Dendritic cell treated with granulocyte-macrophage colony-stimulating factor and Interleukin-4, amounts not matched to agents 40 ng/mL and 50 ng/mL, for 4 days (primary cell): ENCODE measurements at regions of chr12 and their contacts with region 1.

Region 1: DNA sequence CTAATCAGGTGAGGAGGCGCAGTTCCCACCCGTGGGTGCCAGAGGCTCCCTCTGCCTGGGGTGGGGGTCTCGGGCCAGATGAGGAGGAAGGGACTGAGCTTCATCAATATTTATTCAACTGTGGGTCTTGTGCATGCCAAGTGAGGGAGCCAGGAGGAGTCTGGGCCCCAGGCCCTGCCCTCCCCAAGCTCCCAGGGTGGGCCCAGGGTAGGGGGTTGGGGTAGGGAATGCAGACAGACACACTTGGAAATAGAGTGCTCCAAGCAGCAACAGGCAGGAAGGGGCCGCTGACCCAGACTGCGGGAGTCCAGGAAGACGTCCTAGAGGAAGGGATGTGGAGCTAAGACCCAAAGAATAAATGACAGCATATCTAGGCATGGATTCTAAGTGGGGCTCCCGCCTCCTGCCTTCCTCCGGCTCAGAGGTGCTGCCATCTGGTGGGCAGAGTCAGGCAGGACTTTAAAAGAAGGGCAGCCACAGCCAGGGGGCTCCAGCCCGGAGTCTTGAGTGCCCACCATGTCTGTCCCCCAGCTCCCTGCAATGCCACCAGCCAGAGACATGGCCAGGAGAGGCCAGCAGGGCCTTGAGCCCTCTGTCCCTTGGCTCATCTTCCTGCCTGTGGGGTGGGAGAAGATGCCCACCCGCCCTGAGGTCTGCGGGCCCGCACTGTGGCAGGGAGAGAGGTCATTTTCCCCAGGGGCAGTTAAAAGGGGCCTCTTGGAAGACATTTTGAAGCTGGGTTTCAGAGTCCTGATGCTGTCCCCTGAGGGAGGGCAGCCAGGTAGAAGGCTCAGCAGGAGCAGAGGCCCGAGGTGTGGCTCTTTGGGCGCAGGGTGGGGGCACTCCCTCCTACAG is 70.1 kb downstream of the PHETA1 start:
- H3K4me3 Mint-ChIP-seq: no peak overlapping the region
- H3K27ac Mint-ChIP-seq: no peak overlapping the region
- H3K4me1 Mint-ChIP-seq: no peaks in the 10 kb centered on the region
- H3K27me3 Mint-ChIP-seq: peaks cover 4% of the 10 kb centered on the region

Region 2: GRCh38 chr12:111024205-111024801 is 274.5 kb before region 1 on chr12:
- intact Hi-C with region 1: loop called (anchors 1 kb)
- H3K4me3 Mint-ChIP-seq: no peak overlapping the region
- H3K27ac Mint-ChIP-seq: no peak overlapping the region
- H3K4me1 Mint-ChIP-seq: peaks cover 4% of the 10 kb centered on the region
- H3K27me3 Mint-ChIP-seq: peaks cover 44% of the 10 kb centered on the region

Region 3: DNA sequence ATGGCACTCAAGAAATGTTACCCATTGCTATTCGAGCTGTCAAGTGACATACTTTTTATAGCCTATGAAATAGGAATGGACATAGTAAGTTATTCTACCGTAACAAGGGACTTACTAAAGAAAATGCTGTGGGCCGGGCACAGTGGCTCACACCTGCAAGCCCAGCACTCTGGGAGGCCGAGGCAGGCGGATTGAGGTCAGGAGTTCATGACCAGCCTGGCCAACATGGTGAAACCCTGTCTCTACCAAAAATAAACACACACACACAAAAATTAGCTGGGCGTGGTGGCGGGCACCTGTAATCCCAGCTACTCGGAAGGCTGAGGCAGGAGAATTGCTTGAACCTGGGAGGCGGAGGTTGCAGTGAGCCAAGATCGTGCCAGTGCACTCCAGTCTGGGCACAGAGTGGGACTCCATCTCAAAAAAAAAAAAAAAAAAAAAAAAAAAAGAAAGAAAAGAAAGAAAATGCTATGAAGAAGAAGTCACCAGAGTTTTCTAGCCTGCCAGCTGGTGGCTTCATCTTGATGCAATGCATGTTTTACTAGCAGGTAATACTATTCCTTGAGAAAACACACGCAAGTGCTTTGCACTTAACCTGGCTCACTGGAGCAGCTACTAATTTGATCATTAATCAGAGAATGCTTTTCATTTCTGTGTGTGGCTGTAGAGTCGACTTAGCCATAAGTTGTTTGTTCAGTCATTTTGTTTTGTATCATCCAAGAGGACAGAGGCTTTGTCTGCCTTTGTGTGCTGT is 211.7 kb before region 1 on chr12:
- intact Hi-C with region 1: no loop called
- H3K4me3 Mint-ChIP-seq: no peak overlapping the region
- H3K27ac Mint-ChIP-seq: no peak overlapping the region
- H3K4me1 Mint-ChIP-seq: peaks cover 37% of the 10 kb centered on the region
- H3K27me3 Mint-ChIP-seq: peaks cover 22% of the 10 kb centered on the region